Motor neuron (in vitro differentiated cells): ENCODE measurements at regions of chr2 and their contacts with region 1.

Region 1: DNA sequence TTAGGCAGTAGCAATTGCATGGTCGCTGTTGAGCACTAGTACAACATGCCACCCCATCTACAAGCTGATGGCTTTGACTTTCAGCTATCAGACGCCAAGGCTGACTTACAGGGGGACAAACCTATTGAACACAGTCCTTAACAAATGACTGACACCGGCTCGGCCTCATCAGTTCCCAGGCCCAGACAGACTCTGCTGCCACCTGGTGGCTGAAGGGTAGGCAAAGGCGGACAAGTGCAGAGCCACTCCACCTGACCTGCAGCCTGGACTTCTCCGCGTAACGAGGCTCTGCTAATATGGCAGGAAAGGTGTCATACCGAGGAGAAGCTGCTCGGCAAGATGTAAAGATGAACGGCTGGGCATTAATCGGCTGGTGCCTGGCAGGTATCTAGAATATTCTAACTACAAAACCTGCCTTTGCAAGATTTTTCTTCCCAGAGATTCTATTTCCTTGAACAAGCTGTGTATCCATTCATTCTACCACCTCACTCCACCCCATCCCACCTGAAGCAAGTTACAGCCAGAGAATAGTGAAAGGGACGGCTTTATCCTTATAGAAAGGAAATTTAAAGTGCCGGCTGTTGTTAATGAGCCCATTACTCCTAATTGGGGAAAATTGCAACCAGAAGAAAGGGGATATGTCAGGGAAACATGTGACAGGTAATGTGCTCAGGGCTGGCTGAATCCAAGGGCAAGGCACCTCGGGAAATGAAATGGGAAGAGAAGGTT is 67.4 kb downstream of the STEAP3 start:
- ATAC-seq: peak; percentile 91 to 97 (median 95)
- H3K4me3 ChIP-seq: no peak overlapping the region
- H3K27ac ChIP-seq: no peak overlapping the region
- H3K4me1 ChIP-seq: peaks cover 8 to 9% of the 10 kb centered on the region in 2 donors

Region 2: DNA sequence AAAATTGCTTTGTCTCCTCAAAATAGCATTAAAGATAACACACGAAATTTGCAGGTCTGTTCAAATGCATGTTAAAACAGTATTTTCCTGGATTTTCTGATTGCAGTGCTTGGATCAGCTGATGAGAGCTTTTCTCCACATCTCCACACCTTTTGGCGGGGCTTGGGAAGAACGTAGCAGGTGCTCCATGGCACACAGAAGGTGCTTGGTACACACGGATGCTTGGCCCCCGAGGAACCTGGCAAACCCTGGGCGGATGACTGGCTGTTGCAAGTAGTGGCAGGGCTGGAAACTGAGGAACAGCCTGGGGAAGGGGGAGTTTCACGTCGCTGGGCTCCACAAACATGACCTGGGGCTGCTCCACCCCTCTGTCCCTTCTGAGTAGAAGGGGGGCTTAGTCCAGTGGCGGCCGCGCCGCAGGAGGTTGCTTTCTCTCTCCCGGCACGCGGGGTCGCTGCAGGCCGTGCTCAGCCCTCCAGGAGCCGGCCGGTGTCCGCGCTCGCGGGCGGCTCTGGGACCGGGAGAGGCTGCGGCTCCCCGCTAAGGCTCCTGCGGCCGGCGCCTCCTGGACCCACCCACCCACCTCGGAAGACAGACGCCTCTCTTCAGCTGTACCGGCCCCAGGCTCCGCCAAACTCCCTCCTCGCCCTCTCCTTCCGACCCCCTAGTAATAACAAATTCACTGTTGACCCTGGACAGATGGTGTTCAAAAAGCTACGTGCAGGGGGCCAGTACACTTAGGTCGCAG is 279.7 kb before region 1 on chr2:
- in situ Hi-C with region 1: loop called in 6 of 9 experiments (anchors 25 kb)
- ATAC-seq: peak; percentile 85 to 100 (median 98)
- H3K4me3 ChIP-seq: peak overlapping the region in 2 of 5 donors; percentile 7 to 11
- H3K27ac ChIP-seq: no peak overlapping the region
- H3K4me1 ChIP-seq: no peaks in the 10 kb centered on the region

Region 3: DNA sequence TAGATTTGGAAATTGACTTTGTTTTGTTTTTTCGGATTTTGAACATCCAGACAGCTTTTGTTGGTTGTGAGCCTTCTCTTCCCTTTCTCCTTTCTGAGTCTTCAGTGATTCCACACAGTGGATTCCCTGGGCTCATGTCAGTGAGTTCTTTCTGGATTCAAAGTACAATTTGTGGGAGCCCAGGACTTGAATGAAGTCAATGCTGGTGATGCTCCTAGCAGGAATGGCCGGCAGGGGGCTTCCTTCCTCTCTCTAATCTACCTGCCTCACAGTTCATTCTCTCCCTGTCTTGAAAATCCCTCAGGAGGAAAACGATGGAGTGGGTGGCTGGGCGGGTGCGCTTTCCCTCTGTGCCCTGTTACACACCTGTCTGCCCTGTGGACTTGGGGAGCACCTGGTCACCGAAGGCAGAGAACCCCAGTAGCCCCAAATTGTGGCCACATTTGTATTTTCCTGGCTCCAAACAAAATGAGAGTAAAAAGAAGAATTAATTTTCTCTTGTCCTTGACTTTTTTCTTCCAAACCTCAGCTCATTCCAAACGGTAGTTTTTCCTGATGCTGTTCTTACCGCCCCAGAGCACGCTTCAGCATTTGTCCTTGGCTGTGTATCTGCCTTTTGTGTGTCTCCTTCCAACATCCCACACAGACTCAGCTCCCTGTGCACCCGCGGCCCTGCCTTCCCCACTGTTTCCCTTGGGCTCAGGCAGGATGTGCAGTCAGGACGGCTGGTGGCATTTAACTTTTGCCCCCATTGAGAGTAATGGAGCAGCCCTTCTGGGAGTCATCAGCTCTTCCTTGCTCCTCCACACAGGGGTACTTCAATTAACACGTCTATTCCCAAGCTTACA is 262.5 kb before region 1 on chr2:
- in situ Hi-C with region 1: loop called in 7 of 9 experiments (anchors 25 kb)
- ATAC-seq: peak in 3 of 8 experiments; percentile 48 to 63 (median 57)
- H3K4me3 ChIP-seq: no peak overlapping the region
- H3K27ac ChIP-seq: no peak overlapping the region
- H3K4me1 ChIP-seq: peaks cover 0 to 7% of the 10 kb centered on the region in 2 donors

Region 4: DNA sequence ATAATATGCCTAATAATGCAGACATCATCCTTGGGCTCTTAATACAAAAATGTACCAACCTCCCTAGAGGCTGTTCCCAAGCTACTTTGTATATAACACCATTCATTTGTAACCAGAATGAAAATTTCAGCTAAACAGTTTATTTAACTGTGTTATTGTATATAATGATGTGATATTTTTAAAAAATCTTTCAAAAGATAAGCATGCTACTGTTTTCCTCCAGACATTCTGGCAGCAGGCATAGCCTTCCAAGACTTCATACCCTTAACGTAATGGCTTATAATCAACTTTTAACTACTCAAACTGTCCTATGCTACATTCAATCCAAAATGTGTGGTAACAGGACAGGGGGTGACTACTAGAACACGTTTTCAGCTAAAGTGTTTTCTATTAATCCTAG is 274.5 kb after region 1 on chr2:
- in situ Hi-C with region 1: no loop called
- ATAC-seq: no peak
- H3K4me3 ChIP-seq: no peak overlapping the region
- H3K27ac ChIP-seq: no peak overlapping the region
- H3K4me1 ChIP-seq: no peaks in the 10 kb centered on the region